ENCODE measurements at regions of chr4 and their contacts with region 1.

Region 1: DNA sequence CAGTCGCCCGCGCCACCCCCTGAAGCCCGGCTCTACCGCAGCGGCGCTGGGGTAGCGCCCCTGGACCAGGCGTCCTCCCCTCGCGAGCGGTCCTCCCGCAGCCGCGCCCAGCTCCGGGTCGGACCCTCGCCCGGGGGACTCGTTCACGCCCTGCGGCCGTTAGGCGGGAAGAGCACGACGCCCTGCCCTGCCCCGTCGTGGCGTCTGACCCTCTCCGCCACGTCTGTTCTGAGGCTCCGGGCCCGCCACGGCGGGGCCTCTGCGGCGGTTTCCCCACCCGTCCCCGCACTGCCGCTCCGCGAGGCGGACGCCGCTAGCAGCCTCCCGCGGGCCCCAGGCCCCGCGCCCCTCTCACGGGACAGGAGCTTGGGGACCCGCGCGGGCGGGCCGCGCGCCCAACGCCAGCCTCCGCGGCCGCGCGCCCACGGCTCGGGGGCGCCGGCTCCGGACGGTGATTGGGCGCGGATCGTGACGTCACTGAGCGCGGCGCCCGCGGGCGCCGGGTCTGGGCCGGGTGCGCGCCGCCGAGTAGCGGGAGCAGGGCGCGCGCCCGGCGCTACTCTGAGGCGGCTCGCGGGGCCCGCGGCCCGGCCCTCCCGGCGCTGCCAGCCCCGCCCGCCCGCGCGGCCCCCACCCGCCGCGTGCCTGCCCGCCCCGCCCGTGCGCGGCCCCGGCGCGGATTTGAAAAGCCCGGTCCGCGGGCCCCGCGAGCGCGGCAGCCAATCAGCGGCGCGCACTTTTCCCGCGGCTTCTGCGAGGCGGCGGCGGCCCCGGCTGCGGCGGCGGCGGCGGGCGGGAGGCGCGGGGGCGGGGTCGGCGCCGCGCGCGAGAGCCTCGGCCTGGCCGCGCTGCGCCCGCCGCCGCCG is at the start of gene NSD2:
- DNase-seq: peak; percentile 96
- ATAC-seq: peak; percentile 60
- H3K4me3 Mint-ChIP-seq: peak within 1 kb of the TSS; percentile 99
- H3K27ac Mint-ChIP-seq: peak within 1 kb of the TSS; percentile 99
- H3K4me1 Mint-ChIP-seq: peaks cover 36% of the 10 kb centered on the region
- H3K27me3 Mint-ChIP-seq: no peaks in the 10 kb centered on the region
- total RNA-seq, gene NSD2: 194 to 232 TPM

Region 2: GRCh38 chr4:1249148-1249730 is 621.6 kb before region 1 on chr4:
- CTCF ChIA-PET with region 1: no interaction called
- POLR2A ChIA-PET with region 1: no interaction called
- intact Hi-C with region 1: loop called (anchors 1 to 5 kb)
- DNase-seq: peak; percentile 90
- ATAC-seq: peak; percentile 63
- H3K4me3 Mint-ChIP-seq: peak overlapping the region; percentile 80
- H3K27ac Mint-ChIP-seq: peak overlapping the region; percentile 94
- H3K4me1 Mint-ChIP-seq: peaks cover 74% of the 10 kb centered on the region
- H3K27me3 Mint-ChIP-seq: no peaks in the 10 kb centered on the region

Region 3: GRCh38 chr4:1712216-1713002 is 158.4 kb before region 1 on chr4 and contains the start of gene SLBP:
- CTCF ChIA-PET with region 1: no interaction called
- POLR2A ChIA-PET with region 1: interaction called, 4 read pairs
- intact Hi-C with region 1: loop called (anchors 1 to 2 kb)
- DNase-seq: peak; percentile 100
- ATAC-seq: peak; percentile 89
- H3K4me3 Mint-ChIP-seq: peak within 1 kb of the TSS; percentile 99
- H3K27ac Mint-ChIP-seq: peak within 1 kb of the TSS; percentile 98
- H3K4me1 Mint-ChIP-seq: peaks cover 58% of the 10 kb centered on the region
- H3K27me3 Mint-ChIP-seq: no peaks in the 10 kb centered on the region
- total RNA-seq, gene SLBP: 113 to 134 TPM

Region 4: DNA sequence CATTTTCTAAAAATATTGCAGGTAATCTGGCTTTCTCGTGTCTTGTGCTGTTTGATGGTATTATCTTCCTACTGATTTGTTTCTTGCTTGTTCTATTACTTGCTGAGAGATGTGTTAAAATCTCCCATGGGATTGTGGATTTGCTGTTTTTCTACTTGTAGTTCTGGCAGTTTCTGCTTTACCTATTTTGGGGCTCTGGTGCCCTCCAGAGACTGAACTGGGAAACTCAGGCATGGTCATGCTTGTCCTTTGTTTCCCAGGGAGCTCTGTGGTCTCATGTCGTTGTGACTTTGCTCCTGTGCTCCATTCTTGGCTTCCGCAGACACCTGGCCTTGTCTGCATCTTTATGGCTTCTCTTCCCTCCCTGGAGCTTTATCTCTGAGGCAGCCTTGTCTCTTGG is 39.8 kb after region 1 on chr4:
- CTCF ChIA-PET with region 1: interaction called, 4 read pairs
- POLR2A ChIA-PET with region 1: no interaction called
- intact Hi-C with region 1: loop called in 1 of 2 experiments (anchors 5 kb)
- DNase-seq: peak; percentile 41
- ATAC-seq: no peak
- H3K4me3 Mint-ChIP-seq: no peak overlapping the region
- H3K27ac Mint-ChIP-seq: no peak overlapping the region
- H3K4me1 Mint-ChIP-seq: peaks cover 8% of the 10 kb centered on the region
- H3K27me3 Mint-ChIP-seq: no peaks in the 10 kb centered on the region

Region 5: DNA sequence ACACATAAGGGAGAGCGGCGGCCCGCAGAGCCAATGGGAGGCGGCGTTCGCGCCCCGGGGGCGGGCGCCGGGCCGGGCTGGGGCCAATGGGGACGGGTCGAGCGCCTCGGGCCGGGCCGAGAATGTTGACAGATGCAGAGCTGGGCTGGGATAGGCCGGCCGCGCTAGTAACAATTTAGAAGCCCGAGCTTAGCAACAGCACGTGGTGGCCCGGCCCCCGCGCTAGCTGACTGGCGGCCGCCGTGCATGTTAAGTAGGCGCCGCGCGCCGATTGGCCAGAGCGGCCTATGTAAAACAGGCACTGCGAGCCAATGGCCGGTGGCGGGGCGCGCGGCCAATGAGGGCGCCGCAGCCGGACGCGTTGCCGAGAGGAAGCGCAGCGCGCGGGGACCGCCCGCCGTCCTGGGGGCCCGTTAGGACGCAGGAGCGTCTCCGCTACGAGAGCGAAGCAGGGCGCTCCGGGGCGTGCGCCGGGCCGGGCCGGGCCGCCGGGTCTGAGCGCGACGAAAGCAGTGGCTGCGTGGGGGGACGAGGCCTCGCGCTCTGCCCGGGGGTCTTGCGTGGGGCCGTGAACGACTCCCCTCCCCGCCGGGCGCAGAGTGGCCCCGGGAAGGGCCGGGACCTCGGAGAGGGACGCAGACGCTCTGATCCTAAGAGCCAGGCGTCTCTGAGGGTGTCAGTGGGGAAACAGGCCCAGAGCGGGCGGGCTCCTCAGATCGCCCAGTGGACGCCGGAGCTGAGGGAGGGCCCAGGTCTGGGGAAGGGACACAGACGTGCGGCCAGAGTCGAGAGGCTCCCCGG is 391.5 kb after region 1 on chr4:
- CTCF ChIA-PET with region 1: no interaction called
- POLR2A ChIA-PET with region 1: no interaction called
- intact Hi-C with region 1: loop called in 1 of 2 experiments (anchors 1 kb)
- DNase-seq: peak; percentile 99
- ATAC-seq: peak; percentile 96
- H3K4me3 Mint-ChIP-seq: peak overlapping the region; percentile 61
- H3K27ac Mint-ChIP-seq: no peak overlapping the region
- H3K4me1 Mint-ChIP-seq: peaks cover 2% of the 10 kb centered on the region
- H3K27me3 Mint-ChIP-seq: no peaks in the 10 kb centered on the region

Region 6: DNA sequence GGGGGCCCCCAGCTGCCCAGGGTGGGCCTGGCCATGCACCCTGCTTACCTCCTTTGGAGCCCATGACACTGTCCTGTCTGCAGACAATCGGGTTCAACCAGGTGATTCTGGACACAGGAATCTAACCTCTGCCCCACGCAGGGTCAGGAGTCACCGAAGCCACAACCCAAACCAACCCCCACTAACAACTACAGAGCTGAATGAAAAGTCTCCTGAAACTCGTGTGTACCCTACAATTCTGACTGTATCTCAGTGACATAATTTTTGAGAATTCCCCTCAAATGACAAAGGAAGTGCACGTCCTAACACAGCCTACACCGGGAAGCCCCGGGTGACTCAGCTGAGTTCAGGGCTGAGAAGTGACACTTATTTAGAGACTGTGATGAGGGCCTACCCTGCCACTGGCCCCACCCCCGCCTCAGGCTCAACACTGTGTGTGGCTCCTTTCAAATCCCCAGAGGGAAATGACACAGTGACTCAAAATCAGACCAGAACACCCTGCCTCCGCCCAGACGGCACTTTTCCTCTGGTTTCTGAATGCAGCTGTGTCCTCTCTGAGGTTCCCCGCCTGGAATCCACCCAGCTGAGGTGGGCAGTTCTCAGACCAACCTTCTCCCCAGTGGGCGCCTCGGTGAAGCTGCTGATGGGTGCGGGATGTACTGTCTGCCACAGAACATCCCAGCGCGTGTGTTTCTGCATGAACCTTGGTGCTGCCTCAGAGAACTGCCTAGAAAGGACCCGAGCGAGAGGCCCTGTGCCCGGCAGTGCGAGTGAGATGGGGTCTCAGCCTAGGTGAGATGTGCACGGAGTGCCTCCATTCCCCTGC is 875.4 kb after region 1 on chr4:
- CTCF ChIA-PET with region 1: no interaction called
- POLR2A ChIA-PET with region 1: no interaction called
- intact Hi-C with region 1: loop called in 1 of 2 experiments (anchors 1 kb)
- DNase-seq: peak; percentile 98
- ATAC-seq: peak; percentile 97
- H3K4me3 Mint-ChIP-seq: peak overlapping the region; percentile 62
- H3K27ac Mint-ChIP-seq: peak overlapping the region; percentile 97
- H3K4me1 Mint-ChIP-seq: peaks cover 58% of the 10 kb centered on the region
- H3K27me3 Mint-ChIP-seq: no peaks in the 10 kb centered on the region